ENCODE measurements at regions of chr1 and their contacts with region 1.

Region 1: DNA sequence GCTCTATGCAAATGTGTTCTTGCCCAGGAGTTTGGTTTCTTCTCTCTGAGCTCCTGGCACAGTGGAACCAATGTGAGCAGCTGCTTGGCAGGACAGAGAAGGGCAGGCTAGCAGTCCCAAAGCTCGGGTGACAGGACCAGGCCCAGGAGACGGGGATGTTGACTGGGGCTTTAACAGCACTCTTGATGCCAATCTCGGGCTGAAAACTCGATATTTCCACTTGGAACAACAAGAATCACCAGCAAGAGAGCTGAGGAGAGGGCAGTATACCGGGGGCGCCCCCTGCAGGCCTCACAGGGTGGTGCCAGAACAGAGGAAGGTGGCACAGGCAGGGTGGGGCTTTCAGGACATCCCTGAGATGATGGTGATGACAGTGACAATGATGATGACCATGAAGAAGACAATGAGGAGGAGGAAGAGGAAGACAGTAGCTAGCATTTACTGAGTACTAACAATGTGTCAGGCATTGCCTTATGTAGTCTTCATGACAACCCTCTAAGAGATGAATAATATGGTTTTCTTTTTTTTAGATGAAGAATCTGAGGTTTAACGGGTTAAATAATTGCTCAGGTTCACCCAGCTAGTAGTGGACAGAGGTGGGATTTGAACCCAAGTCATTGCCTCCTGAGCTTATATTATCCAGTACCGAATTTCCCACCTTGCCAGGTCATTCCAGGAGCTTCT is 2.7 kb upstream of the KCNJ9 start:
- DNase-seq: peak; percentile 68
- H3K4me3 ChIP-seq: no peak overlapping the region; a peak in 1 of 4 replicates
- H3K27ac ChIP-seq: no peak overlapping the region
- H3K4me1 ChIP-seq: peaks cover 0 to 10% of the 10 kb centered on the region in 2 experiments; a peak in 1 of 4 replicates
- H3K27me3 ChIP-seq: peaks cover 36% of the 10 kb centered on the region
- CTCF ChIP-seq: peak; percentile 79
- EP300 ChIP-seq: no peak
- RAD21 ChIP-seq: peak; percentile 54

Region 2: DNA sequence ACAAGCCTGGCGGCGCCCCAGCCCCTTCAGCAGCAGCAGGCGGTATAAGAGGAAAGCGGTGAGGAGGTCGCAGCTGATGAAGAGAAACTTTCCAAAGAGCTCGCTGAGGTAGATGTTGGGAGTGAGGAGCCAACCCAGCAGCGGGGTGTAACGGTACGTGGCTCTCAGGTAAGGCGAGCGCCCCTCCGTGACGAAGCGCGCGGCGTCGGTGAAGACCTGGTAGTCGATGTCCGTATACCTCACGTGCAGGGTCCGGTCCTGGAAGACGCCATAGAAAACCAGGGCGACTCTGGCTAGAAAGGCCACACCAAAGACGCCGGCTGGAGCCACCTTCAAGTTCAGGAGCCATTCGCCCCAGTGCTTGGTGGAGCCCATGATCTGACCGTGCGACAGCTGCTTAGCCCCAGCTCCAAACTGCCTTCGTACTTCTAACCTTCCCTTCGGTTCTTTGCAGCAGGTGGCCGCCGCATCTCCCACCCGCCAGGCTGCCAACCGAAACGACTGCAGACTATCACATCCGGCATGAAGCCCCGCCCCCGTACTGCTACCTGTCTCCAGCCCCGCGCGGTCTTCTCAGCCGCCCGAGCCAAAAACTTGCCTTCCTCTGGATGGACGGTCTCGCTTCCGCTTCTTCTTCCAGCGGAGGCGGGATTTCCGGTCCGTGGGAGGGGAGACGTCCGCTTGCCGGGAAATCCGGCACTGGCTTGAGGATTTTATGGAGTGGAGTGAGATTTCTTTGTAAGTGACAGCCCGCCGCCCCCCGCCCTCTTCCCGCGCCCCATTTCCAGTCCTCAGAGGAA is 47.1 kb before region 1 on chr1 and contains the start of gene PIGM:
- CTCF ChIA-PET with region 1: interaction called, 37 read pairs
- POLR2A ChIA-PET with region 1: interaction called, 3 read pairs
- DNase-seq: peak; percentile 89
- H3K4me3 ChIP-seq: peak within 1 kb of the TSS; percentile 84 to 93
- H3K27ac ChIP-seq: peak within 1 kb of the TSS in 1 of 2 experiments; percentile 82; a peak in 2 of 4 replicates
- H3K4me1 ChIP-seq: peaks cover 0 to 15% of the 10 kb centered on the region in 2 experiments; a peak in 2 of 4 replicates
- H3K27me3 ChIP-seq: peaks cover 5% of the 10 kb centered on the region; the same call in 1 of the 2 replicates
- CTCF ChIP-seq: no peak
- EP300 ChIP-seq: no peak
- RAD21 ChIP-seq: no peak
- polyA plus RNA-seq, gene PIGM: 4.0 and 5.1 TPM in 2 replicates

Region 3: GRCh38 chr1:160040476-160040875 is 38.2 kb before region 1 on chr1:
- CTCF ChIA-PET with region 1: interaction called, 163 read pairs
- POLR2A ChIA-PET with region 1: no interaction called
- DNase-seq: no peak
- H3K4me3 ChIP-seq: no peak overlapping the region
- H3K27ac ChIP-seq: no peak overlapping the region
- H3K4me1 ChIP-seq: no peaks in the 10 kb centered on the region
- H3K27me3 ChIP-seq: peaks cover 13% of the 10 kb centered on the region; the same call in 1 of the 2 replicates
- CTCF ChIP-seq: no peak
- EP300 ChIP-seq: no peak
- RAD21 ChIP-seq: no peak

Region 4: GRCh38 chr1:160058087-160058486 is 20.6 kb before region 1 on chr1:
- CTCF ChIA-PET with region 1: interaction called, 76 read pairs
- POLR2A ChIA-PET with region 1: no interaction called
- DNase-seq: no peak
- H3K4me3 ChIP-seq: no peak overlapping the region
- H3K27ac ChIP-seq: no peak overlapping the region
- H3K4me1 ChIP-seq: peaks cover 0 to 9% of the 10 kb centered on the region in 2 experiments; a peak in 1 of 4 replicates
- H3K27me3 ChIP-seq: peaks cover 70% of the 10 kb centered on the region
- CTCF ChIP-seq: peak; percentile 19; the same call in 1 of the 2 replicates
- EP300 ChIP-seq: no peak
- RAD21 ChIP-seq: no peak

Measured in SK-N-SH (cell line).